ENCODE measurements at regions of chr7 and their contacts with region 1.

Region 1: GRCh38 chr7:151626422-151627115 is 106.9 kb upstream of the RHEB start:
- DNase-seq: peak; percentile 41
- H3K4me3 ChIP-seq: no peak overlapping the region
- H3K27ac ChIP-seq: no peak overlapping the region
- H3K4me1 ChIP-seq: peaks cover 3 to 25% (median 7%) of the 10 kb centered on the region in 4 donors
- H3K27me3 ChIP-seq: no peaks in the 10 kb centered on the region
- CTCF ChIP-seq: peak; percentile 34 to 55 (median 38)
- EP300 ChIP-seq: no peak
- POLR2A ChIP-seq: no peak

Region 2: GRCh38 chr7:151028131-151028947 is 598.2 kb before region 1 on chr7 and contains the start of gene ABCB8:
- in situ Hi-C with region 1: no loop called
- intact Hi-C with region 1: no loop called
- DNase-seq: peak; percentile 99
- H3K4me3 ChIP-seq: peak within 1 kb of the TSS; percentile 53 to 86 (median 74)
- H3K27ac ChIP-seq: peak within 1 kb of the TSS; percentile 76 to 93 (median 88)
- H3K4me1 ChIP-seq: peaks cover 0 to 19% (median 13%) of the 10 kb centered on the region in 4 donors
- H3K27me3 ChIP-seq: no peaks in the 10 kb centered on the region
- CTCF ChIP-seq: peak; percentile 43 to 84 (median 56)
- EP300 ChIP-seq: no peak
- POLR2A ChIP-seq: peak; percentile 65
- total RNA-seq, gene ABCB8: 33.3 to 76.4 (median 51.4) TPM

Region 3: GRCh38 chr7:151472644-151473380 is 153.8 kb before region 1 on chr7:
- in situ Hi-C with region 1: no loop called
- intact Hi-C with region 1: no loop called
- DNase-seq: peak; percentile 33
- H3K4me3 ChIP-seq: no peak overlapping the region
- H3K27ac ChIP-seq: peak overlapping the region in 2 of 4 donors; percentile 14 to 17
- H3K4me1 ChIP-seq: peaks cover 0 to 10% (median 3%) of the 10 kb centered on the region in 4 donors
- H3K27me3 ChIP-seq: no peaks in the 10 kb centered on the region
- CTCF ChIP-seq: no peak
- EP300 ChIP-seq: no peak
- POLR2A ChIP-seq: no peak

Region 4: GRCh38 chr7:151519765-151520418 is 106.7 kb before region 1 on chr7 and contains the start of gene RHEB:
- in situ Hi-C with region 1: no loop called
- intact Hi-C with region 1: loop called (anchors 10 kb)
- DNase-seq: peak; percentile 99
- H3K4me3 ChIP-seq: peak within 1 kb of the TSS; percentile 73 to 97 (median 82)
- H3K27ac ChIP-seq: peak within 1 kb of the TSS; percentile 99 to 100 (median 99)
- H3K4me1 ChIP-seq: peaks cover 3 to 39% (median 26%) of the 10 kb centered on the region in 4 donors
- H3K27me3 ChIP-seq: no peaks in the 10 kb centered on the region
- CTCF ChIP-seq: no peak
- EP300 ChIP-seq: no peak
- POLR2A ChIP-seq: peak; percentile 26
- total RNA-seq, gene RHEB: 12.7 to 70.5 (median 42.8) TPM

Region 5: GRCh38 chr7:151705636-151706276 is 79.2 kb after region 1 on chr7:
- in situ Hi-C with region 1: no loop called
- intact Hi-C with region 1: loop called (anchors 10 kb)
- DNase-seq: peak; percentile 32
- H3K4me3 ChIP-seq: no peak overlapping the region
- H3K27ac ChIP-seq: peak overlapping the region in 2 of 4 donors; percentile 3 to 17
- H3K4me1 ChIP-seq: peaks cover 0 to 11% (median 2%) of the 10 kb centered on the region in 4 donors
- H3K27me3 ChIP-seq: no peaks in the 10 kb centered on the region
- CTCF ChIP-seq: peak; percentile 24 to 42 (median 32)
- EP300 ChIP-seq: no peak
- POLR2A ChIP-seq: no peak

Region 6: GRCh38 chr7:151755131-151755801 is 128.7 kb after region 1 on chr7:
- in situ Hi-C with region 1: no loop called
- intact Hi-C with region 1: no loop called
- DNase-seq: peak; percentile 37
- H3K4me3 ChIP-seq: no peak overlapping the region
- H3K27ac ChIP-seq: peak overlapping the region; percentile 70 to 83 (median 76)
- H3K4me1 ChIP-seq: peaks cover 20 to 47% (median 24%) of the 10 kb centered on the region in 4 donors
- H3K27me3 ChIP-seq: no peaks in the 10 kb centered on the region
- CTCF ChIP-seq: no peak
- EP300 ChIP-seq: no peak
- POLR2A ChIP-seq: no peak

Region 7: DNA sequence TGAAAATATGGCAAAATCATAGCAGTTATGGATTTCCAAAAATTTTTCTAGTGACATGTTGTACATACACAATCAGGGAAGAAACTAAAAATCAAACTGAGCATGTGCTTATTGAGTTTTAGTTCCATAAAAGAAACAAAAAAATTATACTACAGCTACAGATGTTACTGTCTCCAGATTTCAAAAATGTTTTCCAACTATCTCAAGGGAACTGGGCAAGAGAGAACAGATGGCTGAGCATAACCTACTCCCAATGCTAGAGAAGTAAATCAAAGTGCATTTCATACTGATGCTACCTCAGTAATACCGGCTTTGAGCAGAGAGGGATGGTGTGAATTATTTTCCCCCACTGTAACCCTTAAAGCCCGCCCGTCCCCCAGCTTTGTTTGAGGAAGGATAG is 850.0 kb after region 1 on chr7:
- in situ Hi-C with region 1: no loop called
- intact Hi-C with region 1: no loop called
- DNase-seq: no peak
- H3K4me3 ChIP-seq: no peak overlapping the region
- H3K27ac ChIP-seq: no peak overlapping the region
- H3K4me1 ChIP-seq: no peaks in the 10 kb centered on the region
- H3K27me3 ChIP-seq: no peaks in the 10 kb centered on the region
- CTCF ChIP-seq: no peak
- EP300 ChIP-seq: no peak
- POLR2A ChIP-seq: no peak